Calu3 (cell line): ENCODE measurements at regions of chr14 and their contacts with region 1.

Region 1: GRCh38 chr14:23631702-23632460 is 4.3 kb upstream of the DHRS2 start:
- DNase-seq: peak; percentile 84
- H3K4me3 Mint-ChIP-seq: no peak overlapping the region
- H3K27ac Mint-ChIP-seq: no peak overlapping the region
- H3K4me1 Mint-ChIP-seq: peaks cover 7% of the 10 kb centered on the region
- H3K27me3 Mint-ChIP-seq: peaks cover 56% of the 10 kb centered on the region
- CTCF ChIP-seq: peak; percentile 86

Region 2: DNA sequence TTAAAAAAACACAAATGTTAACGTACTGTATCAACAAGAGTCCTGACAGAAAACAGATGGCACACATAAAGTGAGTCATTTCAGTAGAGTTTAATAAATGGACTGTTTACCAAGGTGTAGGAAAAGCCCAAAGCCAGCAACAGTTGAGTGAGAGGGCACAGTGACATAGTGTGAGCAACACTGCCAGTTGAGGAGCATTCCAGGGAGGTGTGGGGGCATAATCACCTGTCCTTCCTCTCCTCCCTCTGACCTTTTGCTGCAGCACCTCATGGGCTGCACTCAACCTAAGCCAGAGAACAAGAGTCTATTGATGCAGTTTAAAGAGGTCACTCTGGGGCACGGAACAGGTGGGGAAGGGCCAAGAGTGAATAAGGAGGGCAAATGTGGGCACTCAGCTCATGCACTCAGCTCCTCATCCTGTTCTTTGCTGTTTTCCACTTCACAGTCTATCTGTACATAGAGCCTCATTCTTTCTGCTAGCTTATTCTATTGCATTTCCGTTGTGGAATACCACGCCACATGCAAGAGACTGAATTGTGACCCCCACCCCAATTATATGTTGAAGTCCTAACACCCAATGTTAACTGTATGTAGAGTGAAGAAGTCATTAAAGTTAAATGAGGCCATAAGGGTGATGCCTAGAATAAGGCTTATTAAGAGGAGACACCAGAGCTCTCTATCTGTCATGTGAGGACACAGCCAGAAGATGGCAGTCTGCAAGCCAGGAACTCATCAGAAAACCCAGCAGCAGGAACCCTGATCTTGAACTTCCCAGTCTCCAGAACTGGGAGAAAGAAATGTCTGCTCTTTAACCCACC is 33.7 kb after region 1 on chr14:
- CTCF ChIA-PET with region 1: interaction called, 13 read pairs
- intact Hi-C with region 1: no loop called
- DNase-seq: peak; percentile 48
- H3K4me3 Mint-ChIP-seq: no peak overlapping the region
- H3K27ac Mint-ChIP-seq: no peak overlapping the region
- H3K4me1 Mint-ChIP-seq: no peaks in the 10 kb centered on the region
- H3K27me3 Mint-ChIP-seq: peaks cover 74% of the 10 kb centered on the region
- CTCF ChIP-seq: no peak

Region 3: GRCh38 chr14:23929822-23930294 is 298.0 kb after region 1 on chr14:
- CTCF ChIA-PET with region 1: interaction called, 4 read pairs
- intact Hi-C with region 1: loop called (anchors 5 kb)
- DNase-seq: peak; percentile 85
- H3K4me3 Mint-ChIP-seq: no peak overlapping the region
- H3K27ac Mint-ChIP-seq: no peak overlapping the region
- H3K4me1 Mint-ChIP-seq: no peaks in the 10 kb centered on the region
- H3K27me3 Mint-ChIP-seq: peaks cover 37% of the 10 kb centered on the region
- CTCF ChIP-seq: peak; percentile 89